AG04450 (cell line): ENCODE measurements at regions of chrX and their contacts with region 1.

Region 1: DNA sequence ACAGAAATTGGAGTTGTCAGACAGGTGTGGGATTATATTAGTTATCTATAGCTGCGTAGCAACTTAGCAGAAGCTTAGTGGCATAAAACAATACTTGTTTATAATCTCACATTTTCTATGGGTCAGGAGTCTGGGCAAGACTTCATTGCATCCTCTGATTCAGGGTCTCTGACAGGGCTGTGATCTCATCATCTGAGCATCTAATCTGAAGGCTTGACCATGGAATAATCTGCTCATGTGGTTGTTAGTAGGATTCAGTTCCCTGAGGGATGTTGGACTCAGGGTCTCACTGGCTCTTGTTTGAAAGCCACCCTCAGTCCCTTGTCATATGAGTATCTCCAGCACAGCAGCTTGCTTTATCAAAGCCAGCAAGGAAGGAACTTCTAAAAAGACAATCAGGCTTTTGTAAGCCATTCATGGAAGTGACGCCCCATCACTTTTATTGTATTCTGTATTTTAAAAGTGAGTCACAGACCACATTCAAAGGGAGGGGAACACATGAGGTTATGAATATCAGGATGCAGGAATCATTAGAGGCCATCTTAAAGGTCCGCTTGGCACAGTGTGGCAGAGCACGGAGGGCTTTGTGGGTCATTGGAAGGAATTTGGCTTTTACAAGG is 37.2 kb upstream of the FAM9B start:
- DNase-seq: no peak
- H3K4me3 ChIP-seq: no peak overlapping the region
- H3K27ac ChIP-seq: no peak overlapping the region
- H3K27me3 ChIP-seq: no peaks in the 10 kb centered on the region
- CTCF ChIP-seq: no peak

Region 2: DNA sequence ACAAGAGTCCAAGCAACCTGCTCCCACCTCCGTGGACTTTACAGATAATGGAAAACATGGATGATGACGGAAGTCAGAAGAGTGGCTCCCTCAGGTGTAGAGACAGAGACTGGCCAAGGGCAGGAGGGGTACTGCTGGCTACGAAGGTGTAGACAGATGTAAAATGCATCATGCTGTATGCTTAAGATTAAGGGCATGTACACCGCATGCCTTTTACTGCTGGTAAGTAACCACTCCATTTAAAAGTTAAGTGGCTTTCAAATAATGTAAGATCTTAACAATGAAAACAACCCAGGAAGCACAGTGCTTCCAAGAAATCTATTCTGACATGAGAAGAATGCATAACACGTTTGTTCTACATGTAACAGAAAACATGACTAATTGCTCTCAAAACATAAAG is 39.7 kb after region 1 on chrX:
- CTCF ChIA-PET with region 1: interaction called, 11 read pairs
- POLR2A ChIA-PET with region 1: no interaction called
- DNase-seq: no peak
- H3K4me3 ChIP-seq: no peak overlapping the region
- H3K27ac ChIP-seq: no peak overlapping the region
- H3K27me3 ChIP-seq: no peaks in the 10 kb centered on the region
- CTCF ChIP-seq: no peak